CD4-positive, alpha-beta memory T cell (primary cell): ENCODE measurements at regions of chr15 and their contacts with region 1.

Region 1: GRCh38 chr15:69576035-69576526 is 123.5 kb downstream of the RPLP1 start:
- DNase-seq: peak; percentile 59 to 64 (median 61)
- H3K4me3 ChIP-seq: no peak overlapping the region
- H3K4me3 Mint-ChIP-seq: peak overlapping the region in 1 of 8 donors; percentile 37
- H3K27ac ChIP-seq: no peak overlapping the region
- H3K27ac Mint-ChIP-seq: peak overlapping the region in 2 of 7 donors; percentile 25 to 38
- H3K4me1 ChIP-seq: peaks cover 35% of the 10 kb centered on the region
- H3K4me1 Mint-ChIP-seq: peaks cover 18 to 41% (median 33%) of the 10 kb centered on the region in 4 donors
- H3K27me3 ChIP-seq: no peaks in the 10 kb centered on the region
- H3K27me3 Mint-ChIP-seq: peaks cover 0 to 1% of the 10 kb centered on the region in 2 donors

Region 2: DNA sequence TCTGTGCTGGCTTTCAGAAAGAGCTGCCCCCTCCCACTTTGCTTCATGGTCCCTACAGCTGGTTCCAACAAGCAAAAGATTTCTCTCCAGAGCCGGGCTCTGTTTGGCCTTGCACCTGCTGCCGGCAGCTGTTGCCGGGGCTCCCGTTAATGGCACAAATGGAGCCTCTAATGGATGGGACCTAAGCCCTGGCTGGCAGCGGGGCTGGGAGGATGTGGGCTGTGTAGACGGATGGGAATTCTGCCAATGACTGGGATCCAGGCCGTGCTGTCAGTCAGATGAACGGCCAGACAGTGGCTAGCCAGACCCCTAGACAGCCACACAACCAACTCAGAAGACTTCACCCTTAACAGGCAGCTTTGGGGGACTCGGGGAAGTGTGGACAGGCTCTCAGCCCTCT is 35.5 kb before region 1 on chr15:
- CTCF ChIA-PET with region 1: no interaction called
- POLR2A ChIA-PET with region 1: no interaction called
- intact Hi-C with region 1: no loop called
- DNase-seq: no peak
- H3K4me3 ChIP-seq: no peak overlapping the region
- H3K4me3 Mint-ChIP-seq: no peak overlapping the region
- H3K27ac ChIP-seq: no peak overlapping the region
- H3K27ac Mint-ChIP-seq: no peak overlapping the region
- H3K4me1 ChIP-seq: no peaks in the 10 kb centered on the region
- H3K4me1 Mint-ChIP-seq: no peaks in the 10 kb centered on the region
- H3K27me3 ChIP-seq: no peaks in the 10 kb centered on the region
- H3K27me3 Mint-ChIP-seq: peaks cover 0 to 10% of the 10 kb centered on the region in 2 donors

Region 3: GRCh38 chr15:69713726-69714559 is 137.9 kb after region 1 on chr15:
- CTCF ChIA-PET with region 1: interaction called, 4 read pairs
- POLR2A ChIA-PET with region 1: interaction called, 4 read pairs
- intact Hi-C with region 1: loop called (anchors 5 kb)
- DNase-seq: peak; percentile 80 to 92 (median 85)
- H3K4me3 ChIP-seq: no peak overlapping the region
- H3K4me3 Mint-ChIP-seq: peak overlapping the region; percentile 54 to 88 (median 73)
- H3K27ac ChIP-seq: peak overlapping the region; percentile 11
- H3K27ac Mint-ChIP-seq: peak overlapping the region; percentile 81 to 95 (median 90)
- H3K4me1 ChIP-seq: peaks cover 73% of the 10 kb centered on the region
- H3K4me1 Mint-ChIP-seq: peaks cover 47 to 76% (median 64%) of the 10 kb centered on the region in 4 donors
- H3K27me3 ChIP-seq: no peaks in the 10 kb centered on the region
- H3K27me3 Mint-ChIP-seq: no peaks in the 10 kb centered on the region

Region 4: DNA sequence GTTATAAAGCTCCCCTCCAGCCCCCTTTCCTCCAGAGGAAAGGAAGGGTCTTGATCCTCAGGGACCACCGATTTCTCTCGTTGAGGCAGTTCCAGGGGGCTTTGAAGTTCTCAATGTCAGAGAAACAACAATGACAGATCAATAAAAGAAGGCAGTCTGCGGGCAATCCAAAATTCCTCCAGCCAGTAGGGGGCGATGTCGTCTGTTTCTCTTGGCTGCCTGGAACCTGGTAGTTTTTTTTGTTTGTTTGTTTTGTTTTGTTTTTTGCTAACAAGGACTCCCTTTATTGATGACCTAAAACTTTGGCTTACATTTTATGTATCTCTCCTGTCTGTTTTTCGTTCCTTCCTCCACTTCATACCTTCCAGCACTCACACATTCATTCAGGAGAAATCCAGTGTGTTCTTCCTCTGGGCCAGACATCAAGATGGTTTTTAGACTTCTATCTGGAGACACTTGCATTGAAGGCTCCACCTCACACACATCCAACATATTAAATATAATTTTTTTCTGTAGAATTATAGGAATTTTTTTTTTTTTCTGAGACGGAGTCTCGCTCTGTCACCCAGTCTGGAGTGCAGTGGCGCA is 153.2 kb after region 1 on chr15:
- CTCF ChIA-PET with region 1: interaction called, 13 read pairs
- POLR2A ChIA-PET with region 1: no interaction called
- intact Hi-C with region 1: loop called (anchors 2 kb)
- DNase-seq: peak; percentile 59 to 68 (median 64)
- H3K4me3 ChIP-seq: no peak overlapping the region
- H3K4me3 Mint-ChIP-seq: peak overlapping the region in 1 of 8 donors; percentile 10
- H3K27ac ChIP-seq: no peak overlapping the region
- H3K27ac Mint-ChIP-seq: peak overlapping the region in 1 of 7 donors; percentile 0
- H3K4me1 ChIP-seq: peaks cover 20% of the 10 kb centered on the region
- H3K4me1 Mint-ChIP-seq: peaks cover 9 to 32% (median 23%) of the 10 kb centered on the region in 4 donors
- H3K27me3 ChIP-seq: no peaks in the 10 kb centered on the region
- H3K27me3 Mint-ChIP-seq: peaks cover 0 to 2% of the 10 kb centered on the region in 2 donors

Region 5: GRCh38 chr15:70149667-70150404 is 573.8 kb after region 1 on chr15:
- CTCF ChIA-PET with region 1: no interaction called
- POLR2A ChIA-PET with region 1: no interaction called
- intact Hi-C with region 1: loop called (anchors 1 kb)
- DNase-seq: no peak
- H3K4me3 ChIP-seq: no peak overlapping the region
- H3K4me3 Mint-ChIP-seq: no peak overlapping the region
- H3K27ac ChIP-seq: no peak overlapping the region
- H3K27ac Mint-ChIP-seq: no peak overlapping the region
- H3K4me1 ChIP-seq: no peaks in the 10 kb centered on the region
- H3K4me1 Mint-ChIP-seq: no peaks in the 10 kb centered on the region
- H3K27me3 ChIP-seq: no peaks in the 10 kb centered on the region
- H3K27me3 Mint-ChIP-seq: no peaks in the 10 kb centered on the region

Region 6: DNA sequence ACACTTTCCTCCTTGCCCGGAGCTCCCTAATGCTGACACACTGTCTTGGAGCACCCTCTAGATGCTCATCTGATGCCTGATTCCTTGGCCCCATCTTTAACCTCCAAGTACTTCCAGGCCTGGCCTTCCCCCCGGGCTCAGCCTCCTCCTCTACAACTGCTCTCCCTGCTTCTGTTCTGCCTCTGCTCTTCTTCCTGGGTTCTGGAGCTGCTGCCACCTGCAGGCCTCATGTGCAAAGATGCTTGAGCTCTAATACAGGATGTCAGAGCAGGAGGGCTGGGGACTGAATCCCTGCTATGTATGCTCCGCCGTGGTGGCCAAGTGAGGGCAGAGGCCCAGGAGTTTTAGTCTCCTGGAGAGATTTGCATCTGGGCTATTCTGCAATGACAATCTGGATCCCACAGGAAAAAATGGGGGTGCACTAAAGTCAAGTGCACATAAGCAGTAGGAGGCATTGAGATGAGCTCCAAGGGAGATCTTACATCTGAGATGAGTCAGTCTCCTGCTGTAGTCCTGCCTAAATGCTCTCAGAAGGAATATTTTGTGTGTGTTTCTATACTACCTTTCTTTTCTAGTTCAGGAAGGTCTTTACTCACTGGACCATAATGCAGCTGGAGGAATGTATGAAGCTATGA is 890.9 kb after region 1 on chr15:
- CTCF ChIA-PET with region 1: interaction called, 38 read pairs
- POLR2A ChIA-PET with region 1: interaction called, 3 read pairs
- intact Hi-C with region 1: loop called (anchors 1 kb)
- DNase-seq: peak in 4 of 5 donors; percentile 30 to 50 (median 46)
- H3K4me3 ChIP-seq: no peak overlapping the region
- H3K4me3 Mint-ChIP-seq: no peak overlapping the region
- H3K27ac ChIP-seq: no peak overlapping the region
- H3K27ac Mint-ChIP-seq: no peak overlapping the region
- H3K4me1 ChIP-seq: peaks cover 6% of the 10 kb centered on the region
- H3K4me1 Mint-ChIP-seq: peaks cover 4 to 5% (median 5%) of the 10 kb centered on the region in 4 donors
- H3K27me3 ChIP-seq: no peaks in the 10 kb centered on the region
- H3K27me3 Mint-ChIP-seq: peaks cover 0 to 8% of the 10 kb centered on the region in 2 donors

Region 7: DNA sequence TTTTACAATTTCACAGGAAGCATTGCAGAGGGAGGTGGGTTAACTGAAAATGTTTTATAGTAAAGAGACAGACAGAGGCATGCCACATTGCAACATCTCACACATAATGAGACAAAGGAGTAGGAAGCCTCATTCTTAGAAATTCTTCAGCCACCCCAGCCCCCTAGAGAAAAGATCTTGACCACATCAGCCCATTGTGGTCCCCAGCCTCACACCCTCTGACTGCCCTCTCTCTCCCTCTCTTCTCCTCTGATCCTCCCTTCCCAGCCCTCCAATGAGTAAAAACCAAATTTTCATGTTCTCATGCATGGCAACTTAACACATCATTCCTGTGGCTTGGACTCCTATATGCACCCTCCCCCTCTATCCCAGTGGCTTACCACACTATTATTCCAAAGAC is 1013.1 kb after region 1 on chr15:
- CTCF ChIA-PET with region 1: no interaction called
- POLR2A ChIA-PET with region 1: no interaction called
- intact Hi-C with region 1: no loop called
- DNase-seq: no peak
- H3K4me3 ChIP-seq: no peak overlapping the region
- H3K4me3 Mint-ChIP-seq: no peak overlapping the region
- H3K27ac ChIP-seq: no peak overlapping the region
- H3K27ac Mint-ChIP-seq: no peak overlapping the region
- H3K4me1 ChIP-seq: peaks cover 7% of the 10 kb centered on the region
- H3K4me1 Mint-ChIP-seq: peaks cover 5 to 13% (median 10%) of the 10 kb centered on the region in 4 donors
- H3K27me3 ChIP-seq: peaks cover 8% of the 10 kb centered on the region
- H3K27me3 Mint-ChIP-seq: peaks cover 21 to 24% of the 10 kb centered on the region in 2 donors